ENCODE measurements at regions of chr4 and their contacts with region 1.

Region 1: GRCh38 chr4:76305971-76306881 is at the start of gene STBD1:
- DNase-seq: peak; percentile 44 to 85
- H3K4me3 ChIP-seq: peak within 1 kb of the TSS; percentile 68 to 72
- H3K27ac ChIP-seq: peak within 1 kb of the TSS; percentile 79 to 87
- H3K4me1 ChIP-seq: peaks cover 0 to 15% of the 10 kb centered on the region in 2 donors
- H3K27me3 ChIP-seq: no peaks in the 10 kb centered on the region
- CTCF ChIP-seq: peak in 2 of 3 experiments; percentile 1 to 7
- total RNA-seq, gene STBD1: 19.9 TPM

Region 2: GRCh38 chr4:76179398-76180318 is 126.6 kb before region 1 on chr4:
- intact Hi-C with region 1: loop called (anchors 2 kb)
- DNase-seq: peak in 1 of 2 donors; percentile 92
- H3K4me3 ChIP-seq: no peak overlapping the region
- H3K27ac ChIP-seq: no peak overlapping the region
- H3K4me1 ChIP-seq: no peaks in the 10 kb centered on the region
- H3K27me3 ChIP-seq: no peaks in the 10 kb centered on the region
- CTCF ChIP-seq: peak; percentile 61 to 90 (median 88)

Region 3: DNA sequence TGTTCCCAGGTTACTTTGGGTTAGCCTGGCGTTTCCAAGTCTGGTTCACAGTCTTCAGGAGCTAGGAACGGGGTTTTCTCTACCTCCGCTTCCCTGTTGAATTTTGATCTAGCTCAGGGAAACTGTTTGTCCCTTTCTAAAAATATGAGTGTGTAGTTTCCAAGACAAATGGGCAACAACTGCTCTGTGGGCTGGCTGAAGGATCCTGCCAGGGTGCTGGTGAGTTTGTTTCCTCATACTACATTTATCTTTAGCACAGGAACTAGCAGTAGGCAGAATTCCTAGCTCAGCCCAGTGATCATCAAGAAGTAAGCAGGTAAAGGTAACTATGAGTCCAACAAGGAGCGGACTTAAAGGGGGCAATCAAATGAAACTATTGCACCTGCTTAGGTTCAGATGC is 68.0 kb before region 1 on chr4:
- intact Hi-C with region 1: no loop called
- DNase-seq: no peak
- H3K4me3 ChIP-seq: no peak overlapping the region
- H3K27ac ChIP-seq: peak overlapping the region; percentile 62 to 77
- H3K4me1 ChIP-seq: no peaks in the 10 kb centered on the region
- H3K27me3 ChIP-seq: no peaks in the 10 kb centered on the region
- CTCF ChIP-seq: no peak

Region 4: DNA sequence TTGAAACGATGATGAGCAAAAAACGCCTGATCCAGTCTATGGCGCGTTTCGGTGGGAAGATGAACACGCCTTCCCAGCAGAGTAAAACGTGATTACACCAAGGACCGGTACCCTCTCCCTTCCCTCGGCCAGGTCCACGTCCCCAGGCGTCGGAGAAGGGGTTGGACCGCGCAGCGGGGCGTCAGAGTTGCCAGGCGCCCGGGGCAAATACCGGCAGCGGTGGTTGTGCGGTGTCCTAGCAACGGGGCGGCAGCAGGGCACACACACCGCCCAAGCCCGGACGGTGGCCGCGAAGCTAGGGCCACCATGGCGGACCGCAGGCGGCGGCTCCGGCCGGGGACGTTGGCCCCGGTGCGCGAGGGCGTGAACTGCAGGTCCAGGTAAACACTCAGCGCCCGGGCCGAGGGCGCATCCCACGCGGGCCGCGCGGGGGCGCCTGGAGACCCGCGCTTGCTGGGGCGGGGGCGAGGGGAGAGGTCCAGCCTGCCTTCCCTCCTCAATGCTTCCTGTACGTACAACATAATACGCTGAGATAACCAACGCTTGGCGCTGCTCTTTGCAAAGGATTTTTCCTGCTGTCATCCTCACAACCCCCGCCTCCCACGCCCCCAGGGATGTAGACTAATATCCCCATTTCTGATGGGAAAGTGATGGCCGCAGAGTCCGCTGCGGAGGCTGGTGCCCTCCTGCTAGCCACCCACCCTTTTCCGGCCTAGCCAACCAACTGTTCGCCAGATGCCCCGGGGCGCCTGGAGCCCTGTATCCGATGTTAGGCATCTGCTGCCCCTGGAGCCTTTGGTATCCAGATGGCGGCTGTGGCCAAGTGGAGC is 54.6 kb before region 1 on chr4 and contains the start of gene FAM47E:
- intact Hi-C with region 1: loop called (anchors 2 kb)
- DNase-seq: peak; percentile 10 to 83
- H3K4me3 ChIP-seq: peak within 1 kb of the TSS; percentile 75 to 76
- H3K27ac ChIP-seq: no peak within 1 kb of the TSS
- H3K4me1 ChIP-seq: no peaks in the 10 kb centered on the region
- H3K27me3 ChIP-seq: no peaks in the 10 kb centered on the region
- CTCF ChIP-seq: peak; percentile 17 to 42 (median 17)
- total RNA-seq, gene FAM47E: not detected

Region 5: DNA sequence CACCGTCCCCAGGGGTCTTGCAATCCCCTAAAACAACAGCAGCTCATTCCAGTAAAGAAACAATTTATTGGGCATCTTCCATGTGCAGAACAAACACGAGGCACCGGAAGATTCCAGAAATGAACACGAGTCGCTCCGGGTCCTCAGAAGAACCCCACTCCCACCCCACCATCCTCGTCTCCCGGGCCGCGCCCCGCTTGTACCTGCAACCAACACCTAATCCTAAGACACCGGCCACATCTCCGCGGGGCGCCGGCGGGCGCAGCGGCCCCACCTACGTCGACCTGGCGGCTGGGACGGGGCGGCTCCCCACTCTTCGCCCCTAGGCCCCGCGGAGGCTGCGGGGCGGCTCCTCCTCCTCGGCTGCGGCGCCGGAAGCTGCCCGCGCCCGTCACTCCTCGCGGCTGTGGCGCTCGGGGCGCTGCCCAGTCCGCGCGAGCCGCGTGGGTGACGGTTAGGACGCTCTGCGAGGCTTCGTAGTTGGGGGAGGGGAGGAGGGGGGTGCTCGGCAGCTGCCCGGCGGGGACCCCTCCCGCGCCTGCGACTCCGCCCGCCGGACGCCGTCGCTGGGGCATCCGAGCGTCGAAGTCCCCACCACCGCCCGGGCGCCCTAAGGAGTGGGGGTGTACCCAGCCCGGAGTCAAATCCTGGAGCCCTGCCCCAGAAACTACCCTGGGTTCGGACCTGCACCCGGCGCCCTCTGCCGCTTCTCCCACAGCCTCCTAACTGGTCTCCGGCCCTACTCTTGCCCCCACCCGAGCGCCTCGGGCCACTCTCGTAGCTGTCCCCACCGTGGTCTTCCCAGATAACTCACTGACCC is 114.7 kb after region 1 on chr4 and contains the start of gene CCDC158:
- intact Hi-C with region 1: loop called (anchors 2 kb)
- DNase-seq: no peak
- H3K4me3 ChIP-seq: peak within 1 kb of the TSS; percentile 62 to 65
- H3K27ac ChIP-seq: peak within 1 kb of the TSS in 1 of 2 donors; percentile 0
- H3K4me1 ChIP-seq: no peaks in the 10 kb centered on the region
- H3K27me3 ChIP-seq: no peaks in the 10 kb centered on the region
- CTCF ChIP-seq: no peak
- total RNA-seq, gene CCDC158: 1.1 TPM

Region 6: GRCh38 chr4:76504613-76505465 is 198.6 kb after region 1 on chr4:
- intact Hi-C with region 1: loop called (anchors 5 kb)
- DNase-seq: no peak
- H3K4me3 ChIP-seq: no peak overlapping the region
- H3K27ac ChIP-seq: no peak overlapping the region
- H3K4me1 ChIP-seq: no peaks in the 10 kb centered on the region
- H3K27me3 ChIP-seq: no peaks in the 10 kb centered on the region
- CTCF ChIP-seq: peak; percentile 60 to 72 (median 60)

Measured in ascending aorta (tissue), 2 donors.